ENCODE measurements at regions of chr2 and their contacts with region 1.

Region 1: GRCh38 chr2:175414882-175415487 is 233.5 kb upstream of the ATP5MC3 start:
- DNase-seq: peak; percentile 78
- H3K4me3 Mint-ChIP-seq: no peak overlapping the region
- H3K27ac Mint-ChIP-seq: no peak overlapping the region
- H3K4me1 Mint-ChIP-seq: peaks cover 23% of the 10 kb centered on the region
- H3K27me3 Mint-ChIP-seq: no peaks in the 10 kb centered on the region
- CTCF ChIP-seq: peak; percentile 76

Region 2: DNA sequence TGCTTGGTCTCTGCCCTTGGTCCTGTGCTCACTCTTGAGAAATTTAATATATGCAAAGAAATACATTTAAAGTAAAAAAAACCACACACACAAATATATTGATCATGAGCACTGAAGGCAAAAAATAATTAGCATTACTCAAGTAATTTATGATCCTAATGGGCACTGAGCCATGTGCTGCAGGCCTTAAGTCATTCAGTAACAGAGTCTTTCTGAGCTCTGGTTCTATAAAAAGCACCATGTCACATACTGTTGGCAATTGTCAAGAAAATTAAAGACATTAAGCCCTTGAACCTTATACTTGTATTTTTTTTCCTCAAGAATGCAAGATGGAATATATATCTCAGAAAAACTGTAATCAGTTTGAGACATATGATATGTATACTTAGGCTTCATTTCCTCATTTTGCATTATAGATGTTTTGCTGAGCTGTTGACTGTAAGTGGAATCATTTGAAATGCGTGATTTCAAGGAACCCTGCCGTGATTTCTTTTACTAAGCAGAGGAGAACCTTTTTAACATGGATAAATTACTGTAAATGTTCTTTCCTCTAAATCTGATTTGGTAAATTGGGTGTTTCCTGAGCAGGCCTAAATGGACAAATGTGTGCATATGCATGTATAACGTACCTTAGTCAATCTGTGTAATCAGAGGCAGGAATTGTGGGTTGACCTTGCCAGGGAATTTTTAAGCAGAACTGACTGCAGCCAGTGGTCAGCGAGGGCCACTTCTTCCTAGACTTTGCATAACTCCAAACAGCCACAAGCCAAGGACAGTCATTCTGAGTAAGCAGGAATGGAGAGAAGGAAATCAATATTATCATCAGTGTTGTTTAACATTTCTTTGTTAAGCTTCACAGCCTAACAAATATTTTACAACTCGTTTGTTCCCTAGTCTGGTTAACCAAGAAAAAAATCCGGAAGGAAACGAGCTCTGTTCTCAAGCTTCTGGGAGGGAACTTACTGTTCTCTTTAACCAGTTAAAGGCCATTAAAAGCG is 42.0 kb before region 1 on chr2:
- CTCF ChIA-PET with region 1: no interaction called
- intact Hi-C with region 1: loop called (anchors 5 kb)
- DNase-seq: peak; percentile 59
- H3K4me3 Mint-ChIP-seq: peak overlapping the region; percentile 12
- H3K27ac Mint-ChIP-seq: peak overlapping the region; percentile 82
- H3K4me1 Mint-ChIP-seq: peaks cover 29% of the 10 kb centered on the region
- H3K27me3 Mint-ChIP-seq: no peaks in the 10 kb centered on the region
- CTCF ChIP-seq: no peak

Region 3: GRCh38 chr2:175575346-175576258 is 160.6 kb after region 1 on chr2:
- CTCF ChIA-PET with region 1: no interaction called
- intact Hi-C with region 1: loop called (anchors 10 kb)
- DNase-seq: no peak
- H3K4me3 Mint-ChIP-seq: no peak overlapping the region
- H3K27ac Mint-ChIP-seq: no peak overlapping the region
- H3K4me1 Mint-ChIP-seq: no peaks in the 10 kb centered on the region
- H3K27me3 Mint-ChIP-seq: no peaks in the 10 kb centered on the region
- CTCF ChIP-seq: no peak

Region 4: GRCh38 chr2:175684457-175684856 is 269.5 kb after region 1 on chr2:
- CTCF ChIA-PET with region 1: no interaction called
- intact Hi-C with region 1: loop called (anchors 5 kb)
- DNase-seq: no peak
- H3K4me3 Mint-ChIP-seq: no peak overlapping the region
- H3K27ac Mint-ChIP-seq: no peak overlapping the region
- H3K4me1 Mint-ChIP-seq: no peaks in the 10 kb centered on the region
- H3K27me3 Mint-ChIP-seq: peaks cover 42% of the 10 kb centered on the region
- CTCF ChIP-seq: no peak

Measured in Calu3 (cell line).